Activated B cell treated with CpG ODN at 0.5 μM for 24 hours (primary cell): ENCODE measurements at regions of chr3 and their contacts with region 1.

Region 1: DNA sequence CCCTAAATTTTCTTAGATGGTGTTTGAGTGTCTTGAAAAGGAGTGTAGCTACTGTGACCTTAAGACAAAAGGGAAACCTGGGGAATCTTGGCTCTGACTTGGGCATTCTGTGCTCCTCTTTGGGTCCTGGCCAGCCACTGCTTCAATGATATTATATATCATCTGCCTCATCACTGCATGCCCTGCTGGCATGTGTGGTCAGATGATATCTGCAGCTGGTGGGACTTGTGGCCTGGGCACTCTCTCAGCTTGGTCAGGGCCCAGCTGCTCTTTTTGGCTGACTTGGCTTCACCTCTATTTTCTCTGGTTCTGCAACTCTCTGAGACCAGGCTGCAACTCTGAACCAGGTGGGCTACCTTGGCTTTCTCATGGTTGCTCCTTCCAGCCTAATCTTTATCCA is 446.1 kb upstream of the RARB start:
- DNase-seq: no peak
- ATAC-seq: no peak
- H3K4me3 Mint-ChIP-seq: no peak overlapping the region
- H3K27ac Mint-ChIP-seq: no peak overlapping the region
- H3K4me1 Mint-ChIP-seq: no peaks in the 10 kb centered on the region
- H3K27me3 Mint-ChIP-seq: no peaks in the 10 kb centered on the region
- CTCF ChIP-seq: no peak

Region 2: DNA sequence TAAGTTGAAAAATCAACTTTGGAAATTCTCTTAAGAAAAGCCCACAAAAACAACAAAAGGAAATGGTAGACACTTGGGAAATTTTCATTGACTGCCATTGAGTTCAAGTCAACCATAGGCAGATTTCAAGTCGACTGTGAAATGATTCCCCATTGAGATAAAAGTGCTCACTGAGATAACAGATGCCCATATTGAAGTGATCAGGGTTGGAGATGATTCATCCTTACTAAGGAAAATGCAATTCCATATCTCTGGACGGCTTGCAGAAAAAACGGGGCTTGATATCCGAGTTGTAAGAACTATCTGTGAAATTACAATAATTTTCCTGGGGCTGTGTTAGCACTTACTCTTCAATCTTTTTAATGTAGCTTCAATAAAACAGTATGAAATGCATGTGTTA is 114.1 kb before region 1 on chr3:
- CTCF ChIA-PET with region 1: no interaction called
- POLR2A ChIA-PET with region 1: no interaction called
- intact Hi-C with region 1: no loop called
- DNase-seq: no peak
- ATAC-seq: no peak
- H3K4me3 Mint-ChIP-seq: no peak overlapping the region
- H3K27ac Mint-ChIP-seq: no peak overlapping the region
- H3K4me1 Mint-ChIP-seq: no peaks in the 10 kb centered on the region
- H3K27me3 Mint-ChIP-seq: no peaks in the 10 kb centered on the region
- CTCF ChIP-seq: no peak

Region 3: GRCh38 chr3:24914036-24914435 is 67.9 kb before region 1 on chr3:
- CTCF ChIA-PET with region 1: no interaction called
- POLR2A ChIA-PET with region 1: no interaction called
- intact Hi-C with region 1: no loop called
- DNase-seq: no peak
- ATAC-seq: no peak
- H3K4me3 Mint-ChIP-seq: no peak overlapping the region
- H3K27ac Mint-ChIP-seq: no peak overlapping the region
- H3K4me1 Mint-ChIP-seq: no peaks in the 10 kb centered on the region
- H3K27me3 Mint-ChIP-seq: no peaks in the 10 kb centered on the region
- CTCF ChIP-seq: no peak

Region 4: DNA sequence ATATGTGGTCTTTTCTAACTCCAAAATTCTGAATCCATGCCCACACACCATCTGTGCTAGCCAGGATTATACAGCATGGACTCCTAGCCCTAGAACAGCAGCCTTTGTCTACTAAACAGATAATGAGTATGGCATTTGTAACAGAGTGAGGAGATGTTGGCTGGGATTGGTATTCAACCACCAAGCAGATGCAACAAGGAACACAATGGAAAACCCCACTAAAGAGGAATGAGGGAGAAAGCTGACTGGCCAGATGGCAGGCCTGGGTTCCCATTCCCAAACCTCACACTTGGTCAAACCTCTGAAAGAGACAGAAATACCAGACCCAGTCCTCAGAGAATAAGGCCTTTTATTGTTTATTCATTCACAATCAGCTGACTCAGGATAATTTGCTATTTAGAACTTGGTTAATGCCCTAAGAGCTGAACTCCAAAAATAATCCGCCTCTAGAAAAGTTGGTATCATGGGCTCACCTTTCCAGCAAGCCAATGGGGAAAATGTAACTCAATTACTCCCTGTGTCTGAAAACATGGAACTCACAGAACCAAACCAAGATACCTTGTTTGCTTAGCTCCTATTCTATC is 1786.2 kb after region 1 on chr3:
- CTCF ChIA-PET with region 1: no interaction called
- POLR2A ChIA-PET with region 1: no interaction called
- intact Hi-C with region 1: loop called (anchors 5 kb)
- DNase-seq: no peak
- ATAC-seq: no peak
- H3K4me3 Mint-ChIP-seq: no peak overlapping the region
- H3K27ac Mint-ChIP-seq: no peak overlapping the region
- H3K4me1 Mint-ChIP-seq: no peaks in the 10 kb centered on the region
- H3K27me3 Mint-ChIP-seq: no peaks in the 10 kb centered on the region
- CTCF ChIP-seq: no peak